AG04450 (cell line): ENCODE measurements at regions of chr5 and their contacts with region 1.

Region 1: GRCh38 chr5:141691867-141692532 is 10.0 kb upstream of the ARAP3 start:
- DNase-seq: peak; percentile 38
- H3K4me3 ChIP-seq: peak overlapping the region; percentile 59
- H3K27ac ChIP-seq: no peak overlapping the region
- H3K27me3 ChIP-seq: peaks cover 38% of the 10 kb centered on the region
- CTCF ChIP-seq: peak; percentile 97

Region 2: GRCh38 chr5:140953234-140953633 is 738.8 kb before region 1 on chr5:
- CTCF ChIA-PET with region 1: no interaction called
- POLR2A ChIA-PET with region 1: no interaction called
- DNase-seq: no peak
- H3K4me3 ChIP-seq: no peak overlapping the region
- H3K27ac ChIP-seq: no peak overlapping the region
- H3K27me3 ChIP-seq: no peaks in the 10 kb centered on the region
- CTCF ChIP-seq: no peak

Region 3: DNA sequence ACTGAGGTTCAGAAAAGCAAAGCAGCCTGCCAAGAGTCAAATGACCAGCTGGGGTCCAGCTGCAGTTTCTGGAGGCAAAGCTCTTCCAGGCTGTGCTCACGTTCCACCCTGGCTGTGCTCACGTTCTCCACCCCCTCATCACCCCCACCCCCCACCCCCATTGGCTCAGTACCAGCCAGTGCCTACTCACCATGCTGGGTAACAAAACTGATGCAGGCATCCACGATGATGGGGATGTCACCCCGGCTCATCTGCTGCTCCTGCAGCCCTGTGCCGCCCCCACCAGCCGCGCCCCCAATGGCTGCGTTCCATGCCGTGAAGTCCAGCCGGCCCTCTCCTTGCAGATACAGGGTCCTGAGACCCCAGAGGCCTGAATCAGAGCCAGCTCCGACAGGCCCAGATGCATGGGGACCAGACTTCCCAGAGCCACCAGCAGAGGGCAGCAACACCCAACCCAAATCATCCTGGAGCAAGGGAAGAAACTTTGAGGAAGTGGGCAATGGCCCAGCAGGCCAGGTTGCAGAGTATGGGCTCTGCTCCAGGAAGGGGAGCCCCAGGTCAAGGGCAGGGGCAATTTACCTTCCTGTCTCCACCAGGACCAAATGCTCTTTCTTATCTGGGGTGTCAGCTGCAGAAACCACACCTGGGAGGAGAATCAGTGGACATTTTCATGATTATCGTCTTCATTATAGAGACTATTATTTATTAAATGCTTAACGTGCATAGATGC is 27.1 kb before region 1 on chr5:
- CTCF ChIA-PET with region 1: interaction called, 11 read pairs
- POLR2A ChIA-PET with region 1: no interaction called
- DNase-seq: no peak
- H3K4me3 ChIP-seq: no peak overlapping the region
- H3K27ac ChIP-seq: no peak overlapping the region
- H3K27me3 ChIP-seq: no peaks in the 10 kb centered on the region
- CTCF ChIP-seq: peak; percentile 93

Region 4: DNA sequence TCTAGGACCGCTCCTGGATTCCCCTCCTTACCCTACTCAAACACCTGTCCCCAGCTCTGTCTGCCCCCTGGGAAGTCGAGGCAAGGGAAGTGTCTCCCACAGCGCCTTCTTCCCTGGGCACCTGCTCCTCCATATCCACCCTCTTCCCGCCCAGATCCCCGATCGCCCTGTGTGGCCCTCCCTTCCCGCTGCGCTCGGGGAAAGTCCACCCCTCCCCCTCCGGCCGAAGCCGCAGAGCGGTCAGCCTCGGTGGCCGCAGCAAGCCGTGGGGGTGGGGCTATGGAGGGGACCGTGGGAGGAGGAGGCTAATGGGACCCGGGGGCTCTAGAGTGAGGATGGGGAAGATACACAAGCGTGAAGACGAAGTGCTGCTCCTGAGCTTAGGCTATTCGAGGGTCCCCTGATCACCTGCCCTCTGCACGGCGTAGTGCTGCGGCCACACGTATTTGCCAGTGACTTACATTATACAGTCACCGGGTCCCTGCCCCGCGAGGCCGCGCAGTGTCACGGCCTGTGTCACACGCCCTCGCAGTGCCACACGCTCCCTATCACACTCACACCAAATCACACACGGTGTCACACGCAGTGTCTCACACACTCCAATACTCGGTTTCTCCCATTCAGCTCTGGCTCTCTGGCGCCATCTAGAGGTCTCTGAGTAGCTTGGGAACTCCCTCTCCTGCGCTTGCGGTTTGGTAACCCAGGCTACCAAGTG is 186.9 kb after region 1 on chr5:
- CTCF ChIA-PET with region 1: interaction called, 169 read pairs
- POLR2A ChIA-PET with region 1: interaction called, 3 read pairs
- DNase-seq: peak; percentile 46
- H3K4me3 ChIP-seq: peak overlapping the region; percentile 39
- H3K27ac ChIP-seq: no peak overlapping the region
- H3K27me3 ChIP-seq: peaks cover 80% of the 10 kb centered on the region
- CTCF ChIP-seq: peak; percentile 99

Region 5: GRCh38 chr5:141923448-141924352 is 231.7 kb after region 1 on chr5 and contains the start of gene DELE1:
- CTCF ChIA-PET with region 1: interaction called, 19 read pairs
- POLR2A ChIA-PET with region 1: interaction called, 6 read pairs
- DNase-seq: peak; percentile 68
- H3K4me3 ChIP-seq: peak within 1 kb of the TSS; percentile 87
- H3K27ac ChIP-seq: peak within 1 kb of the TSS; percentile 99
- H3K27me3 ChIP-seq: no peaks in the 10 kb centered on the region
- CTCF ChIP-seq: no peak
- polyA plus RNA-seq, gene DELE1: 54.7 and 72.3 TPM in 2 replicates

Region 6: DNA sequence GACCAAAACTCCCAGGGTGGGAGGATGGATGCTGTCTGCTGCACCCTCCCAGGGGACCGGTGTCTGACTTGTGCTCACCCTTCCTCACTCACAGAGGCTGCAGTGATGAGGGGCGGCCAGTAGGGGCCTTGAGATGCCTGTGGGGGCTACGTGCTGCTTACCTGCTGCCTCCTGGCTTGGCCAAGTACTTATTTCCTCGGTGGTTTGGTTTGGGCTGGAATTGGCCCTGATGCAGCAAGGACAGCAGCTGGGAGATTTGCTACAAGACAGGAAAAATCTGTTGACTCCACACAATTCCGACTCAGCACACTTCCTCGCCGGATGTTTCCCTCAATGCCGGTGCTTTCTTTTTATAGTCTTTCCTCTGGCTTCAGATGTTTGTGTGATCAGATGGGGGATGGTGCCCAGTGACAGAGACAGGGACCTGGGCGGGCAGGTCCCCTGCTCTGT is 259.4 kb after region 1 on chr5:
- CTCF ChIA-PET with region 1: interaction called, 422 read pairs
- POLR2A ChIA-PET with region 1: no interaction called
- DNase-seq: no peak
- H3K4me3 ChIP-seq: no peak overlapping the region
- H3K27ac ChIP-seq: no peak overlapping the region
- H3K27me3 ChIP-seq: peaks cover 34% of the 10 kb centered on the region
- CTCF ChIP-seq: peak; percentile 55